ENCODE measurements at regions of chr2 and their contacts with region 1.

Region 1: DNA sequence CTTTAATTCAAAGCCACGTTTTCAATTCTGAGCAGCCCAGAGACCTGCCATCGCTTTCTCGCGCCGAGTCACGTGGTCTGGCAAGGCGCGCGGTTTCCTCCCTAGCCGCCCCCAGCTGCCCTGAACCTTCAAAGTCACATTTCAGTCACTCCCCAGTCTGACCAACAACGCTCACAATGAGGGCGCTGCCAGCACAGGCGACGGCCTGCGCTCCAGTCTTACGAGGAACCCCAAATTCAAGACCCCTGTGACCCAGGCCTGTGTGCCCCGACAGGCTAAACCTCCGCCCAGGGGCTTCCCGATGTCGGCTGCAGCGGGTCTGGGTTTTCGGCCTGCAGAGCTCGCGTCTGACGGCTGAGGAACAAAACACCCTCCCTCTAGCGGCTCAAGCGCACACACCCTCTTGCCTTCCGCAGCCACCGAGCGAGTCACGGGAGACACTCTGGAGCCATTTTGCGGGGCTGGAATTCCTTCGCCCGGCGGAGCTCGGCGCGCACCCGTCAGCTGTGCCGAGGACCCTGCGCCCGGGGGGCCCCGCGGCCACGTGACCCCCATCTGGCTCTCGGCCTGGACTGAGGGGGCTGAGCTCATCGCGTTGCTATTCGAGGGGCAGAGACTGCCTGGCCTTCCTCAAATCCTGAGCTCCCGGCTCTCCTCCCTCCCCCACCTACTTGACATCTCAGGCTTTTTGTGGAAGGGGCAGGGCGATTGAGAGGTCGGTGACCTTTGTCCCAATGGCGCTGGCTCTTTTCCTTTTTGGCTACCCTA is 69.9 kb upstream of the ITGB6 start:
- DNase-seq: peak; percentile 95

Region 2: GRCh38 chr2:160207804-160208661 is 62.0 kb before region 1 on chr2:
- intact Hi-C with region 1: loop called (anchors 1 kb)
- DNase-seq: peak; percentile 81

Region 3: DNA sequence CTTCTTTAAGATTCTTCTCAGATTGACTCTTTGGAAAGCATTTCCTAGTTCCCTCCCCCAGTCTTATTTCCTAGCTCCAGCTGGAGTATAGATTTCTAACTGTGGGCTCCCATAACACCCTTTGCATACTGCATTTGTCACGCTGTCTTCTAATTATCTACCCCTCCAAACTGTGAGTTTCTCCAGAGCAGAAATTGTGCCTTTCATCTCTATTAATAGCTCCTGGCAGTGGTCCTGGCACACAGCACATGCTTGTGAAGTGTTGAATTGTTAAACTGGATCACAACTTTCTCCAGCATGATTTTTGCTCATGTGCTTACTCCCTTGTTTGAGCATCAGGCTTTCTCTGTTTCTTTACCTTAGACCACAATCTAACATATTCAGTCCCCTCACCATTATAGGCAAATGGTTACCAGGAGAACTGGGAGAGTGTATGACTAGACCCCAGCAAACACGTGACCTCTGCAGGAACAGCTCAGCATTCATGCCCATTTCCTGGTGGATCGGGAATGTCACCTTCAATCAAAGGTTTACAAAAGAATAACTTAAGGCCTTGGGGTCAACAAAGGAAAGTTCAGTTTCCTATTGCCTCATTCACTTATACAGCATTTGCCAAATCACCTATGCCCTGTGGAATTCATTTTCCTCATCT is 714.6 kb after region 1 on chr2:
- intact Hi-C with region 1: loop called (anchors 2 kb)
- DNase-seq: no peak

Measured in cardiac septum (tissue), 1 donor.